HEK293T (cell line): ENCODE measurements at regions of chr18 and their contacts with region 1.

Region 1: GRCh38 chr18:58768293-58768974 is 96.2 kb upstream of the ZNF532 start:
- DNase-seq: peak; percentile 71

Region 2: DNA sequence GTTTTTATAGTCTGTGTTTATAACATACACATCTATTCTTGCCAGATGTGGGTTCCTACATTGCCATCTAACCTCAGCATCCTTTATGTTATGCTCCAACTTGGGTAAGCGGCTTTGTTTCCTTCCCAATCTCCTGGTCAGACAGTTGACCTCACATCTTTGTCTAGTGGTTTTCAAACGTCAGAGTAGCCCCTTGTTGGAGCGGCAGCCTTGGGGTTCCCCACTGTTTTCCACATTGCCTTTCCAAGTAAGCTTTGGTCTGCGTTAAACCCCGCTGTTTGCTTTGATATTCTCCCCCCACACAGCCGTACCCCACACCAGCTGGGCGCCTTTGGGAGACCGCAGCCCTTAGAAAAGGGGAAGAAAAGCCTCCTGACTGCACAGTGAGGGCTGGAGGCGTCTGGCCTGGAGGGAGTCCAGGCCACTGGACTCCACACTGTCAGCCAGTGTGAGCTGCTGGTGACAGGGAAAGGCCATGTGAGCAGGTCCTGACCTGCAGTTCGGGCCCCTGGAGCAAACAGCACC is 13.8 kb before region 1 on chr18:
- CTCF ChIA-PET with region 1: interaction called, 21 read pairs
- POLR2A ChIA-PET with region 1: no interaction called
- DNase-seq: no peak

Region 3: DNA sequence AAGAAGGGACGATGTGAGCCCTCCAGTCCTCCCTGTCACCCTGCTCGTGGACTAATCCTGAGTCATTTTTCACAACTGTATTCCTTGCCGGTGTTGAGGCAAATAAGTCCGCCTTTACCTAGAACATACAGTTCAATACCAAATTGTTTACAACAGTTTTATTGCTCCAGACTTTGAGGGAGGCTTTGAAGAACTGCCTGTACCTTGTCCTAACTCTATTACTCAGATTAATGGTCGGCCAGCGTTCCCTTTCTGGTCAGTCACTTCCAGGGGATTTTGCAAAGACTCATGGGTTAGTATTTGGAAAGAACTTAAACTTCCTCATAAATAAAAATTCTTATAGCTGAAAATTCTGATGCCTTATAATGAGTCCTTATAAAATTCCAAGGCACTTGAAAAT is 11.1 kb after region 1 on chr18:
- CTCF ChIA-PET with region 1: interaction called, 12 read pairs
- POLR2A ChIA-PET with region 1: no interaction called
- DNase-seq: no peak

Region 4: GRCh38 chr18:59070181-59070912 is 301.9 kb after region 1 on chr18:
- CTCF ChIA-PET with region 1: interaction called, 24 read pairs
- POLR2A ChIA-PET with region 1: no interaction called
- DNase-seq: peak; percentile 70